Activated T-helper 1 cell treated with anti-CD3 and anti-CD28 coated beads, Interleukin-12 subunit alpha, Interleukin-12 subunit beta, Interleukin-2, Interleukin-4 antibody, amounts not matched to agents 30 ng/mL and 10 ng/mL and 1 ng/mL, durations not matched to agents 14 hours and 24 hours and 36 hours (primary cell): ENCODE measurements at regions of chr1 and their contacts with region 1.

Region 1: GRCh38 chr1:156338180-156338973 is at the starts of genes CCT3 and TSACC:
- DNase-seq: peak; percentile 99
- H3K4me3 Mint-ChIP-seq: peak within 1 kb of the TSS; percentile 98
- H3K27ac Mint-ChIP-seq: peak within 1 kb of the TSS; percentile 95
- H3K4me1 Mint-ChIP-seq: peaks cover 41% of the 10 kb centered on the region
- H3K27me3 Mint-ChIP-seq: peaks cover 5% of the 10 kb centered on the region
- total RNA-seq, gene CCT3: 567 and 570 TPM in 2 replicates
- total RNA-seq, gene TSACC: 0.81 TPM in 1 of 2 replicates, not detected in the other

Region 2: DNA sequence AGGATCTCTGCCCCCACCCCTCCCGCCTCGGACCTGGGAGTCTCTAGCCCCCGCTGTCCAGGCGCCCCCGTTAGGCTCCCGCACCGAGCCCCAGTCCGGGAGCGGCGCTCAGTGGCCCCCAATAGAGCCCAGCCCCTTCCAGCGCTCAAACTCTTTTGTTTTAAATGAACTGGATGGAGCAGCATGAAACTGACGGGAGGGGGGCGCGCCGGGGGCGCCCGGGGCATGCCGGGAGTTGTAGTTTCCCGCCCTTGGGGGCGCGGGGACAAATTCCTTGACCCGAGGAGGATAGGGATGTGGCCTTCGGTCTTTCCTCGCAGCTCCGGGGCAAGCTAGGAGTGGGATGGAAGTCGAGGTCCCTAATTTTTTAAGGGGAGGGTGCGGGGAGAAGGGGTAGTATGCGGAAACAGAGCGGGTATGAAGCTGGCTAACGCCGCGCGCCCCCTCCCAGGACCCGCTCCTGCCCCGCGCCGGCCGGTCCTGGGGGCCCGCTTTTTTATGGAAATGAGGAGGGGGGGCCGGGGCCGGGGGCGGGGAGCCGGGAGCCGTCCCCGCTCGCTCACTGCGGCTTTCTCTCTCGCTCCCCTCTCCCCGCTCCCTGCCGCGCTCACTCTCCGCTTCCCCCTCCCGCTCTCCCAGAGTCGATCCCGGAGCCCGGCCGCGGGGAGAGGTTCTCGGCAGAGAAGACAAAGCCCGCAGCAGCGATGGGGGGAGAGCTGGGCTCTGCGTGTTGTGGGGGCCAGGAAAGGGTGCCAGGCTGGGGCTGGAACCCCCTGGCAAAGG is 255.9 kb before region 1 on chr1 and contains the start of gene MEX3A:
- intact Hi-C with region 1: loop called (anchors 2 kb)
- DNase-seq: peak; percentile 42
- H3K4me3 Mint-ChIP-seq: peak within 1 kb of the TSS; percentile 82
- H3K27ac Mint-ChIP-seq: no peak within 1 kb of the TSS
- H3K4me1 Mint-ChIP-seq: peaks cover 5% of the 10 kb centered on the region
- H3K27me3 Mint-ChIP-seq: peaks cover 76% of the 10 kb centered on the region
- total RNA-seq, gene MEX3A: 0.27 and 0.41 TPM in 2 replicates

Region 3: GRCh38 chr1:156295391-156295947 is 42.9 kb before region 1 on chr1 and contains the start of gene GLMP:
- intact Hi-C with region 1: loop called (anchors 1 kb)
- DNase-seq: peak; percentile 48
- H3K4me3 Mint-ChIP-seq: peak within 1 kb of the TSS; percentile 90
- H3K27ac Mint-ChIP-seq: peak within 1 kb of the TSS; percentile 86
- H3K4me1 Mint-ChIP-seq: peaks cover 15% of the 10 kb centered on the region
- H3K27me3 Mint-ChIP-seq: no peaks in the 10 kb centered on the region
- total RNA-seq, gene GLMP: 17.2 and 20.3 TPM in 2 replicates

Region 4: GRCh38 chr1:156319664-156320063 is 18.7 kb before region 1 on chr1:
- intact Hi-C with region 1: no loop called
- DNase-seq: no peak
- H3K4me3 Mint-ChIP-seq: no peak overlapping the region
- H3K27ac Mint-ChIP-seq: no peak overlapping the region
- H3K4me1 Mint-ChIP-seq: no peaks in the 10 kb centered on the region
- H3K27me3 Mint-ChIP-seq: no peaks in the 10 kb centered on the region

Region 5: DNA sequence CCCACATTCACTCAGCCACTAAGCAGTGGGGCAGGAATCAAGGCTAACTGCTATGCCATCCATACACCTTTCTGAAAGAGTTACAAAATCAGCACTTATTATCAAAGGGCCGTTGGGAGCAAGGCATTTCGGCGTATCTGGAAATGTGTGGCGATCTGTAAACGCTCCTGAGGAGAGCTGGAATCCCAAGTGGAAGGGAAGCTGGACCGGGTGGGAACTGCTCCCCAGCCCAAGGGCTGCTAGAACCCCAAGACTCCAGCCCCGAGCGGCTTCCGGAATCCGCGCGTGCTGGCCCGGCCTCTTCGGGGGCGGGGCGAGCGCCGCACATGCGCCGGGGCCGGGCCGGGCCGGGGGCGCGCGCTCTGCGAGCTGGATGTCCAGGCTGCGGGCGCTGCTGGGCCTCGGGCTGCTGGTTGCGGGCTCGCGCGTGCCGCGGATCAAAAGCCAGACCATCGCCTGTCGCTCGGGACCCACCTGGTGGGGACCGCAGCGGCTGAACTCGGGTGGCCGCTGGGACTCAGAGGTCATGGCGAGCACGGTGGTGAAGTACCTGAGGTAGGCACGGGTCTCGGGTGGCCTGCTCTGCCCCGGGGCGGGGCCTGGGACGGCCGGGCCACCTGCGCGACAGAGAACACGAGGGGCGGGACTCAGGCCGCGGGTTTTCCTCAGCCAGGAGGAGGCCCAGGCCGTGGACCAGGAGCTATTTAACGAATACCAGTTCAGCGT is 253.2 kb after region 1 on chr1 and contains the start of gene NAXE:
- intact Hi-C with region 1: loop called (anchors 1 kb)
- DNase-seq: peak; percentile 68
- H3K4me3 Mint-ChIP-seq: peak within 1 kb of the TSS; percentile 83
- H3K27ac Mint-ChIP-seq: peak within 1 kb of the TSS; percentile 85
- H3K4me1 Mint-ChIP-seq: peaks cover 19% of the 10 kb centered on the region
- H3K27me3 Mint-ChIP-seq: no peaks in the 10 kb centered on the region
- total RNA-seq, gene NAXE: 77.8 and 78.0 TPM in 2 replicates

Region 6: DNA sequence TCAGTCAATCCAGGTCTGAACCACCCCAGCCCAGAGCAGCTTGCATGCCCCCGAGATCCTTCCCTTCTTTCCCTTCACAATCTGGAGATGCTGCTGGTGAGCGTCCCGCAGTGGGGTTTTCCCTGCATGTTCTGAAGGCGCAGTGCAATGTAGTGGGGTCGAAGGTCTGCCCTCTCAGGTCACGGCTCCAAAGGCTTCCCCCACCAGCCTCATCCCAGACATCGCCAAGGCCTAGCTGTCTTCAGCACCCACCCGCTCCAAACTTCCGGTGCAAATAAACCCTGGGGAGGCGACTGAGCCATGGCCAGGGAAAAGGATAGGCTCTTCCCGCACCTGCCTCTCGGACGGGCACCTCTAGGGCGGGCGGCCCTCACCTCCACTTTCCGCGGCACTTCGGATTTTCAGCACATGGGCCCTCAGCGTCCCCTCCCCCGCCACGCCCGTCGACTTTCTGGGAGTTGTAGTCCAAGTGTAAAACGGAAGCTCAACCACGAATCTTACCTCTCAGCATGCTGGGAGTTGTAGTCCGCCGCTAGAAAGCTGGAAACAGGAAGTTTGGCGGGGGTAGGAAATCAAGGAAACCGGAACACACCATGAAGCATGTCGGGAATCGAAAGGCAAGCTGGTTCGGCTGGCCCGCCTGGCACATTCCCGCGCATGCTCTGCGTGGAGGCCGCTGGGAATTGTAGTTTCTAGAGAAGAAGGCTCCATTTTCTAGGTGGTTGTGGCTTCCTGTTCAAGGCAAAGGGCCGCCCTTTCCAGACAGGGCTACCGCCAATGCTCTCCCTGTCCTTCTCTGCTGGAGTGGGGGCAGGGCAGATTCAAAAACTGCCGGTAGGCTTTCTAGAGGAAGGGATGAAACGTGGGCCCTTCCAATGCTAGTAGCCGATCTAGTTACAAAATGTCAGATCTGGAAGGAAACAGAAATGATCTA is 402.6 kb after region 1 on chr1 and contains the start of gene MRPL24:
- intact Hi-C with region 1: loop called (anchors 1 kb)
- DNase-seq: peak; percentile 97
- H3K4me3 Mint-ChIP-seq: peak within 1 kb of the TSS; percentile 93
- H3K27ac Mint-ChIP-seq: peak within 1 kb of the TSS; percentile 94
- H3K4me1 Mint-ChIP-seq: peaks cover 54% of the 10 kb centered on the region
- H3K27me3 Mint-ChIP-seq: no peaks in the 10 kb centered on the region
- total RNA-seq, gene MRPL24: 132 and 135 TPM in 2 replicates

Region 7: DNA sequence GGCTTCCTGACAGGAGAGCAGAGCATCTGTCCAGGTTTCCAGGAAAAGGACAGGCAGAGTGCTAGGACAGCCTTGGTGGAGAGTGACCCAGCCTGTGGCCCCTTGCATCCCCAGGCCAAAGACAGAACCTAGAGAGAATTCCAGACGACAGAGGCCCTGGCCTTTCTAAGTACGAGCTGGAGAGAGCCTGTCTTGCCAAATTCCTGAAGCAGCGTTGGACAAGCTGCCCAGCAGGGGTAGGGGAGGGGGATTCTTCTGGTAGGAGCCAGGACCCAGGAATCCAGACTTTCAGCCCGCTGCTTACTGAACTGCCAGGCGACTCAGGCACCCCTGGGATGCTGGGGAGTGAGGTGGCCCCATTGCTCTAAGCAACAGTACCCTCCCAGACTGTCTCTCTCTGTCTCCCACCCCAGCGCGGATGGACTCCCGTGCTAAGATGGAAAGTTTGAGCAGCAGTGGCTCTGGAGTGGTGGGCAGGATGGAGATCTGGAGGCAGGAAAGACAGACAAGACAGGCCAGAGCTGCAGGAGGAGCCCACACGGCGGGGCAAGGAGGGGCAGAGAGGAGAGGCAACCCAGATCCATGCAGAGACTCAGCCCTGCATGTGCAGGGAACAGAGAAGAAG is 546.3 kb after region 1 on chr1:
- intact Hi-C with region 1: no loop called
- DNase-seq: no peak
- H3K4me3 Mint-ChIP-seq: no peak overlapping the region
- H3K27ac Mint-ChIP-seq: no peak overlapping the region
- H3K4me1 Mint-ChIP-seq: peaks cover under 1% of the 10 kb centered on the region
- H3K27me3 Mint-ChIP-seq: peaks cover 26% of the 10 kb centered on the region